Activated CD4-positive, alpha-beta T cell treated with anti-CD3 and anti-CD28 coated beads for 36 hours (primary cell): ENCODE measurements at regions of chr6 and their contacts with region 1.

Region 1: GRCh38 chr6:87407901-87408720 is at the start of gene CFAP206:
- DNase-seq: peak; percentile 89
- ATAC-seq: peak; percentile 85
- H3K4me3 Mint-ChIP-seq: peak within 1 kb of the TSS; percentile 70
- H3K27ac Mint-ChIP-seq: no peak within 1 kb of the TSS
- H3K4me1 Mint-ChIP-seq: peaks cover 4% of the 10 kb centered on the region
- H3K27me3 Mint-ChIP-seq: peaks cover 15% of the 10 kb centered on the region
- total RNA-seq, gene CFAP206: not detected

Region 2: DNA sequence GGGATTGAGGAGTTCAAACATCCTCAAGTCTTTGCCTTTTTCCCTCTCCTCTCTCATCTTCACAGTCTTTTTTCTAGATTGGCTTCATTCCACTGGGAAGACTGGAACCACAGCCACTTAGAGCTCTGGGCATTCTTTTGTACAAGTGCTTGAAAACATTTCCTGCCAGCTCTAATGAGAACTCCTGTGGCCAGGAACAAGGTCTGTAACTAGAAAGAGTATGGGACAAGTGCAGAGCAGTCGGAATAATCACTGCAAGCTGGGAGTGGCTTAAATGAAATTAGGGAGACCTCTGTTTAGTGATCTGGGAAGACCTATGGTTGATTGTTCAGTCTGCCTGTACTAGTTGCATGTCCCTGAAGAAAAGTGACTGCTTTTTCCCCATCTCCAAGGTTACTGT is 126.7 kb before region 1 on chr6:
- CTCF ChIA-PET with region 1: no interaction called
- POLR2A ChIA-PET with region 1: no interaction called
- intact Hi-C with region 1: no loop called
- DNase-seq: no peak
- ATAC-seq: no peak
- H3K4me3 Mint-ChIP-seq: no peak overlapping the region
- H3K27ac Mint-ChIP-seq: no peak overlapping the region
- H3K4me1 Mint-ChIP-seq: peaks cover 9% of the 10 kb centered on the region
- H3K27me3 Mint-ChIP-seq: peaks cover 4% of the 10 kb centered on the region

Region 3: DNA sequence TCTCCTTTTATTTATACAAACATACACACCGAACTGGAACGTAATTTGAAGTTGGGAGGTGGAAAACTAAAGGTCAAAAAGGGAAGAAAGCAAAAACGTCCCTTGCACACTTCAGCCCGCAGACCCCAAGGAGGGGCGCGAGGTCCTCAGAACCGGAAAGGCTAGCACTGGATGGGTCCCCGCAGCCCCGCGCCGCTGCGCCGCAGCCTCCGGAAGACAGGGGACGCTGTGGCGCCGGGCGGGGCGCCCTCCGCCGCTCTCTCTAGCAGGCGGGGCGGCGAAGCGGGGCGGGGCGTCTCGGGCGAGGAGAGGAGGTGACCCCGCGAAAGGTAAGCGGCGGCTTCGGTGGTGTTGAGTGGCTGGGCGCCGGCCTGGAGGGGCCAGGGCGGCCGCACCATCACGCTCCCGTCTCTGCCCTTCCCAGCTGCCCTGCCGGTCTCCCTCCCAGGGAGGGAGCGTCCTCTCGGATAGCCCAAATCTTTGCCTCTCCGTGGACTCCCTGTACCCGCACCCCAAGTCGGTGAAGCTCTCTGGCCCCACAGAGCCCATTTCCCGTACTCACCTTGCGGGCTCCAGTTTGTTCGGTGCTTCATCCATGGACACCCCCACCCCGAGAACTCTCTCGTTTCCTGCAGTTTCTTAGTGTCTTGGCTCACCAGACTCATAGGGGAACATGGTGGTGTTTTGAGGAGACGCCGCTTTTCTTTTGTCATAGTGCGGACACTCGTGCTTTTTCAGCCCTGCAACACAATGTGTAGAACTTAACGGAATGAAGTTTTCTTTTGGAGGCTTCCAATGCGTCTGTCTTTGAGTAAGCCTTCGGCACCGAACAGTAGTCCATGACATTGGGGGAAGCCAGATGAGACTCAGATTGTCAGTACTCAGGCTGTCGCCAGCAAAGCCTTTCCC is 85.6 kb before region 1 on chr6 and contains the start of gene SMIM8:
- CTCF ChIA-PET with region 1: no interaction called
- POLR2A ChIA-PET with region 1: no interaction called
- intact Hi-C with region 1: loop called (anchors 1 to 2 kb)
- DNase-seq: peak; percentile 94
- ATAC-seq: peak; percentile 100
- H3K4me3 Mint-ChIP-seq: peak within 1 kb of the TSS; percentile 92
- H3K27ac Mint-ChIP-seq: peak within 1 kb of the TSS; percentile 94
- H3K4me1 Mint-ChIP-seq: peaks cover 16% of the 10 kb centered on the region
- H3K27me3 Mint-ChIP-seq: no peaks in the 10 kb centered on the region
- total RNA-seq, gene SMIM8: 8.5 to 10.1 TPM

Region 4: DNA sequence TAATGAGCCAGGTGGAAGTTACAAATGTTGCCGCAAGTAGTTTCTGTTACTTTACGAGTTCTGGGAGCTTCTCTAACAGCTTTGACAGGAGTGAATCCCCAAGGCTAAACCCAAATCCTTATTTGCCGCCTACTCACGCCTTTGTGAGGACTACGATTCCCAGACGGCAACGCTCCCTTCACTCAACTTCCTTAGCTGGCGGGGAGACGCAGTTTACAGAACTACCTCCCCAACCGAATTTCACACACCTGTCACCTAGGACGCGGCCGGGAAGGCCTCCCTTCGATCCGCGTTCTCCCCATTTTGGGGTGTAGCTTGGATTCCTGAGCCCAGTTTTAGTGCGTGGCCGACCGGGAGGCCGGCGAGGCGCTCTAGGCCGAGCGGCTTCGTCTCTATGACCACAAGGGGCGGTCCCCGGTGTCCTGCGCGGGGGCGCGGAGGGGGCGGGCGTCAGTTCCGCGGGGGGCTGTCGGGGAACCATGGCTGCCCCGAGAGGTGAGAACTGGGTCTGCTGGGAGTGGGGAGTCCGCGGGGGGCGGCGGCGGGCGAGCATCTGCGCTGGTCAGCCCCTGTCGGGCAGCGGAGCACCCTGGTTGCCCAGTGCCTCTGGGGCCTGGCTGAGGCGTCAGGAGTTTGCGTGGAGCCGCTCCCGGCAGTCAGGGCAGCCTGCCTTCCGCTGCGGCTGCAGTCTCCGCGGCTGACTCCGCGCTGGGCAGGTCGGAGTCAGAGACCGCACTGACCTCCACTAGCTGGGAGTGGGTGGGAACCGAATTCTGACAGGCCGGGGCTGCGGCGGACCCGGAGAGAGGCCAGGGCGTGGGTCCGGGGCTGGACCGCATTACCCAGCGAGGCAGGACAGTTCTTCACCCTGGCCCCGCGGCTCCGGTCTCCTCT is 64.7 kb after region 1 on chr6 and contains the start of gene SLC35A1:
- CTCF ChIA-PET with region 1: interaction called, 8 read pairs
- POLR2A ChIA-PET with region 1: no interaction called
- intact Hi-C with region 1: loop called (anchors 1 kb)
- DNase-seq: peak; percentile 92
- ATAC-seq: peak; percentile 90
- H3K4me3 Mint-ChIP-seq: peak within 1 kb of the TSS; percentile 88
- H3K27ac Mint-ChIP-seq: peak within 1 kb of the TSS; percentile 93
- H3K4me1 Mint-ChIP-seq: peaks cover 18% of the 10 kb centered on the region
- H3K27me3 Mint-ChIP-seq: peaks cover 3% of the 10 kb centered on the region
- total RNA-seq, gene SLC35A1: 6.5 to 9.9 TPM

Region 5: GRCh38 chr6:87660226-87660911 is 252.3 kb after region 1 on chr6:
- CTCF ChIA-PET with region 1: no interaction called
- POLR2A ChIA-PET with region 1: no interaction called
- intact Hi-C with region 1: no loop called
- DNase-seq: no peak
- ATAC-seq: no peak
- H3K4me3 Mint-ChIP-seq: no peak overlapping the region
- H3K27ac Mint-ChIP-seq: no peak overlapping the region
- H3K4me1 Mint-ChIP-seq: peaks cover 8% of the 10 kb centered on the region
- H3K27me3 Mint-ChIP-seq: no peaks in the 10 kb centered on the region